MCF 10A (cell line): ENCODE measurements at regions of chr11 and their contacts with region 1.

Region 1: DNA sequence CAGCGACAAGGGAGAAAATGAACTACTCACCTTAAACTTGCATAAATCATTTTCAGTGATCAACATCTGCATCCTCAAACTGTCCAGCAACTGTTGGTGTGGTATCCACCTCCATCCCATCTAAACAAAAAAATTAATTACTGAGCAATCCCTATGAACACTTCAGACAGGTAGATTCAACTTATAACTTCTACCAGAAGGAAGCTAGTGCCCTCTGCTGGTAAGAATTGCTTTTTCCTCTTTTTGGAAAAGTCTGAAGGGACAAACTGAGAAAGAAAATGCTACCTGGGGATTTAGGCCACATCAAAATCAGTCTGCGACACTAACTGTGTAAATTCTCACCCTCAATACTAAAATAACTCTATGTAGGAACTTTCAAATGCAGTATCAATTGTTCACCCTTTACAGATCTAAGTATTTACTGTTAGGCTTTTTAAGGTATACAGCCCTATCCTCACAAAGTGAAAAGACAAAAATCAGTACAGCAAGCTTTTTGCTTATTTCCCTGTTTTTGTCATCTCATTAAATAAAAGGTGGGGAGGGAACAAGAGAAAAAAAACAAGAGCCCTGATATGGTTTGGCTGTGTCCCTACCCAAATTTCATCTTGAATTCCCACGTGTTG is 17.9 kb downstream of the CLNS1A start:
- DNase-seq: peak; percentile 58
- H3K4me3 Mint-ChIP-seq: no peak overlapping the region
- H3K27ac Mint-ChIP-seq: no peak overlapping the region
- H3K4me1 Mint-ChIP-seq: no peaks in the 10 kb centered on the region
- H3K27me3 Mint-ChIP-seq: no peaks in the 10 kb centered on the region
- CTCF ChIP-seq: peak; percentile 62

Region 2: GRCh38 chr11:77346906-77347603 is 272.6 kb before region 1 on chr11:
- CTCF ChIA-PET with region 1: no interaction called
- POLR2A ChIA-PET with region 1: no interaction called
- intact Hi-C with region 1: no loop called
- DNase-seq: no peak
- H3K4me3 Mint-ChIP-seq: no peak overlapping the region
- H3K27ac Mint-ChIP-seq: no peak overlapping the region
- H3K4me1 Mint-ChIP-seq: peaks cover 11% of the 10 kb centered on the region
- H3K27me3 Mint-ChIP-seq: no peaks in the 10 kb centered on the region
- CTCF ChIP-seq: no peak

Region 3: DNA sequence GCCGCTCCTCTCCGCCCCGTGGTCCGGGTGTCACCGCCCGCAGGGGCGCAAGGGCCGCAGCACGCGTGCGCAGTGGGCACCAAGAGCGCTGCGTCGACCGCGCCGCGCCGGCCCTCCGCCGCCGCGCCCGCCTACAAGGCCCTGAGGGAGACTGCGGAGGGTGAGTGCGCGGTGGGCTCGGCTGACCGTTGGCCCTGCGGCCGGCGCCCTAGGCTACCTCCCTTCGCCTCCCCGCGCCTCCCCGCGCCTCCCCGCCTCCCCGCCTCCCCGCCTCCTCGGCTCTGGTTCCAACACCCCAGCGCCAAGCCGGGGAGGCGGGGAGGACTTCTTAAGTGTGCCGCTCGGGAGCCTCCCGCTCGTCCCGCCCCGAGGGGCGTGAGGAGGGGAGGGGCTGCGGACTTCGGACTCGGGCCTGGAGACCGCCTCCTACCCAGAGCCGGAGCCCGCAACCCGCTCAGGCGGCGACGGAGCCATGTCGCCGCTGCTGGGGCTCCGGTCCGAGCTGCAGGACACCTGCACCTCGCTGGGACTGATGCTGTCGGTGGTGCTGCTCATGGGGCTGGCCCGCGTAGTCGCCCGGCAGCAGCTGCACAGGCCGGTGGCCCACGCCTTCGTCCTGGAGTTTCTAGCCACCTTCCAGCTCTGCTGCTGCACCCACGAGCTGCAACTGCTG is 30.0 kb before region 1 on chr11 and contains the start of gene AQP11:
- CTCF ChIA-PET with region 1: interaction called, 11 read pairs
- POLR2A ChIA-PET with region 1: no interaction called
- intact Hi-C with region 1: no loop called
- DNase-seq: peak; percentile 66
- H3K4me3 Mint-ChIP-seq: peak within 1 kb of the TSS; percentile 78
- H3K27ac Mint-ChIP-seq: no peak within 1 kb of the TSS
- H3K4me1 Mint-ChIP-seq: peaks cover 10% of the 10 kb centered on the region
- H3K27me3 Mint-ChIP-seq: no peaks in the 10 kb centered on the region
- CTCF ChIP-seq: no peak
- total RNA-seq, gene AQP11: 0.27 TPM in 1 of 2 replicates, not detected in the other

Region 4: DNA sequence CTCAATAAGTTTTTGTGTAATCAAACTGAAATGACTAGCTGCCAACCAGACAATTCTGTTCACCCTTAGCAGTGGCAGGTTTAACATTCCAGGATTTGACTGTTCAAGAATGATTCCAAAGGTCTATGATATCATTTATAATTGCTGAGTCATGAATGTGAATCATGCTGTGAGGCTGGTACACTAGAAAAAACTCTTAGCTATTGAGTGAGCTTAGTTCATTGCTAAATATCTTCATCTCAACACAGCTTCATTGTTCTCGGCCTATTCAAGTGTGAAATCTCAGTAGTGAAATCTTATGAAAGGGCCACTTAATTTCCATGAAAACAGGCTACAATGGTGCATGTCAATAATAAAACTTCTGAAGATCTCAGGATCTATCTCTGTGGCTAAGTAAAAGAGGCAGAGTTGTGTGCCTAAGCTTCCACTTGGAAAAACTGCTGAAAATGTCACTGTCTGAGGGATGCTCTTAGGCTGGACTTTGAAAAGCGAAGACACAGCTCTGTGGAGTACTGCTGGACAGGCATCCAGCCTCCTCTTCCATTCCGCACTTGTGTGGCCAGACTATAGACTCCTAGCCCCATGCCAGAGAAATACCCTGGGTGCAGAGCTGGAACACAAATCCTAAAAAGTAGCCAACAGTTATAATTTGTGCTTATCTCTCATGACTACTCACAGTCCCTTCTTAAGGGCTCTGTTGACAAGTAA is 17.2 kb before region 1 on chr11:
- CTCF ChIA-PET with region 1: interaction called, 37 read pairs
- POLR2A ChIA-PET with region 1: interaction called, 4 read pairs
- intact Hi-C with region 1: no loop called
- DNase-seq: peak; percentile 74
- H3K4me3 Mint-ChIP-seq: no peak overlapping the region
- H3K27ac Mint-ChIP-seq: peak overlapping the region; percentile 49
- H3K4me1 Mint-ChIP-seq: peaks cover 14% of the 10 kb centered on the region
- H3K27me3 Mint-ChIP-seq: no peaks in the 10 kb centered on the region
- CTCF ChIP-seq: no peak